Activated CD8-positive, alpha-beta T cell treated with anti-CD3 and anti-CD28 coated beads, Interleukin-2, amount 10 ng/mL, durations not matched to agents 7 days and 5 days (primary cell): ENCODE measurements at regions of chr2 and their contacts with region 1.

Region 1: DNA sequence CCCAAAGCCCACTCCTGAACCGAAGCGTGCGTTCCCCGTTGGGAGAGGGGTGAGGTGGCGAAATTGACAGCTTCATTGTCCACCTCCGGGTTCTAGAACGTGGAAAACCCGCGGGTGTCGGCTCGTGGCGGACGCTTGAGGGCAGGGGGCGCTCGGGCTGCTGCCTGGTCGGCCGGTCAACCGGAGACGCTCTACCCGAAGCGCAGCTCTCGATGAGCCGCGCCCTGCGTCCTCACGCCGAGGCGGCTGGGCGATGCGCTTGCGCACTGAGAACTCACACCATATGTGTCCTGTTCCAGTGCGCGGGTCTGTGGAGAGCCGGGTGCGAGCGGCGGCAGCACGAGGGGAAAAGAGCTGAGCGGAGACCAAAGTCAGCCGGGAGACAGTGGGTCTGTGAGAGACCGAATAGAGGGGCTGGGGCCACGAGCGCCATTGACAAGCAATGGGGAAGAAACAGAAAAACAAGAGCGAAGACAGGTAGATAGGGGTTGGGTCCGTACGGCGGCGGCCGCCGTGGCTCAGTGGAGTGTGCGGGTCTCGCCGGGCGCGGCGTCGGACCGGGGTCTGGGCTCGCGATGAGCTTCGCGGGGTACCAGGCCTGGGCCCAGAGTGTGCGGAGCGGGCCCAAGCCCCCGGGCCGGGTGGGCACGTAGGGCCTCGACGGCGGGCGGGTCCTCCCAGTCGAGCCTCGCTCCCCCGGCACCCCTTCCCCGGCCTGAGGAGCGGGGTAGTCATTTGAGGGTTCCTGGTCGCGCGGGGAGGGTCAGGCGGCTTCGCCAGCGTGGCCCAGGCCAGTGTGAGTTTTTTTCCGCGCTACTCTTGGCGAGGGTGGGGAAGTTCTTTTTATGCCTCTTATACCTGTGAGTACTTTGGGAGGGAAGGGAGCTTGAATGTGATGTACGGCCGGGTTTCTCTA is at the start of gene EIF5B:
- DNase-seq: peak; percentile 94
- ATAC-seq: peak; percentile 81
- H3K4me3 Mint-ChIP-seq: no peak within 1 kb of the TSS
- H3K27ac Mint-ChIP-seq: no peak within 1 kb of the TSS
- H3K4me1 Mint-ChIP-seq: peaks cover 39% of the 10 kb centered on the region
- H3K27me3 Mint-ChIP-seq: no peaks in the 10 kb centered on the region
- total RNA-seq, gene EIF5B: 47.5 TPM

Region 2: GRCh38 chr2:99180755-99181623 is 156.4 kb before region 1 on chr2 and contains the starts of genes MITD1 and MRPL30:
- CTCF ChIA-PET with region 1: interaction called, 17 read pairs
- POLR2A ChIA-PET with region 1: interaction called, 23 read pairs
- DNase-seq: peak; percentile 94
- ATAC-seq: peak; percentile 91
- H3K4me3 Mint-ChIP-seq: peak within 1 kb of the TSS; percentile 97
- H3K27ac Mint-ChIP-seq: peak within 1 kb of the TSS; percentile 92
- H3K4me1 Mint-ChIP-seq: peaks cover 41% of the 10 kb centered on the region
- H3K27me3 Mint-ChIP-seq: no peaks in the 10 kb centered on the region
- total RNA-seq, gene MITD1: 51.3 to 53.3 TPM
- total RNA-seq, gene MRPL30: 23.3 to 24.4 TPM

Region 3: GRCh38 chr2:99348173-99348572 is 10.8 kb after region 1 on chr2:
- CTCF ChIA-PET with region 1: interaction called, 12 read pairs
- POLR2A ChIA-PET with region 1: interaction called, 12 read pairs
- DNase-seq: no peak
- ATAC-seq: no peak
- H3K4me3 Mint-ChIP-seq: no peak overlapping the region
- H3K27ac Mint-ChIP-seq: no peak overlapping the region
- H3K4me1 Mint-ChIP-seq: peaks cover 30% of the 10 kb centered on the region
- H3K27me3 Mint-ChIP-seq: no peaks in the 10 kb centered on the region

Region 4: GRCh38 chr2:99489761-99490622 is 152.6 kb after region 1 on chr2 and contains the start of gene REV1:
- CTCF ChIA-PET with region 1: interaction called, 11 read pairs
- POLR2A ChIA-PET with region 1: interaction called, 8 read pairs
- DNase-seq: peak; percentile 92
- ATAC-seq: peak; percentile 91
- H3K4me3 Mint-ChIP-seq: peak within 1 kb of the TSS; percentile 92
- H3K27ac Mint-ChIP-seq: peak within 1 kb of the TSS; percentile 98
- H3K4me1 Mint-ChIP-seq: peaks cover 33% of the 10 kb centered on the region
- H3K27me3 Mint-ChIP-seq: peaks cover 4% of the 10 kb centered on the region
- total RNA-seq, gene REV1: 39.4 to 42.1 TPM